Tibial artery (tissue), 4 donors: ENCODE measurements at regions of chr1 and their contacts with region 1.

Region 1: DNA sequence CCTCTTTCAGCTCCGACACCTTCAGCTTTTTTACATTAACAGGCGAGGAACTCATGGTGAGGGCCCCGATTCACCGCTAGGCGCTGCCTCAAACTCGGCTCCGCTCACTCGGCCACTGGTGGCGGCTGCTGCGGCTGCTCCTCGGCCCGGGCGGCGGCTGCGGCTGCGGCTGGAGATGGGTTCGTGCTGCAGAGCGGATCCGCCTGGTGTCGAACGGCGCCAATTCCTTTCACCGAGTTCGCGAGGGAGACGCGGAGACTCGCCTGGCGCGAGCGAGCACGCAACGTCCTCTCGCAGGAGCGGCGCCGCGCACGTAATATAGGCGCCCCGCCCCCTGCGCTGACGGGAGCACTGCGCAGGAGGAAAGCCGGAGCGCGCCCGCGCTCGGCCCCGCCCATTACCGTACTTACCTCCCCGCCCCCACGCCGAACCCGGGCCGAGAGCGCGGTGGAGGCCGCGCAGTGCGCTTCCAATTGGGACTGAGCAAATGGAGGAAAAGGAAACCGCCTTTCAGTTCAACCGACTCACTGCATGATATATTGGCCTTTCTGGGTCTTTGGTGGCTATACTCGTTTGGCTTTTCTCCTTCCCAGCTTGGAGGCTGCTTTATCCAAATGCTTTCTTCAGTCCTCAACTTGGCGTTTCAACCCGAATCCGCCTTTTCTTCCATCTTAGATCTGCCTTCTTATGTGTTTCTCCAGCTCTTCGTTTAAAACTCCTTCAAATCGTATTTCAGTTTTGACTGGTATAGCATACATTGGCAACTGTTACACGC is at the start of gene HNRNPU:
- DNase-seq: peak; percentile 97 to 98
- H3K4me3 ChIP-seq: peak within 1 kb of the TSS; percentile 96 to 98
- H3K27ac ChIP-seq: peak within 1 kb of the TSS; percentile 100
- H3K4me1 ChIP-seq: peaks cover 0 to 37% (median 21%) of the 10 kb centered on the region in 4 donors
- H3K27me3 ChIP-seq: no peaks in the 10 kb centered on the region
- CTCF ChIP-seq: peak; percentile 24 to 45

Region 2: DNA sequence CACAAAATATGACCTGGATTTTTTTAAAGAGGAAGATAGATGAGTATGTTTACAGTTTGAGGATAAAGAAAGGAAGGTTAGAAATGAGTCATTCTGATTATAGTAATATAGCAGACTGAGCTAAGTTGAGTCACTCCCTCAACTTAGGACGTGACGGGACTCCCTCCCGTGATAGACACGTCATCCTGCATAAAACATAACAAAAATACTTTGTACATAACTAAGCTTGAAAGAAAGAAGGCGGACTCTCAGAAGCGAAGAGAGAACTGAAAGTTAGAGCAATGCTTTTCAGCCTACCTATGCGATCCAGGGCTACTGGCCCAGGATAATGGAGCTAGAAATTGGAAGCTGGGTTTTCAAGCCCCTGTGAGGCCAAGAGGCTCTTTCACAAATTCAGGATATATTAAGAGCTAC is 264.5 kb before region 1 on chr1:
- intact Hi-C with region 1: loop called (anchors 5 kb)
- DNase-seq: peak in 1 of 2 donors; percentile 35
- H3K4me3 ChIP-seq: peak overlapping the region in 1 of 2 donors; percentile 12
- H3K27ac ChIP-seq: peak overlapping the region; percentile 47 to 56
- H3K4me1 ChIP-seq: peaks cover 0 to 5% (median 0%) of the 10 kb centered on the region in 4 donors
- H3K27me3 ChIP-seq: no peaks in the 10 kb centered on the region
- CTCF ChIP-seq: no peak

Region 3: DNA sequence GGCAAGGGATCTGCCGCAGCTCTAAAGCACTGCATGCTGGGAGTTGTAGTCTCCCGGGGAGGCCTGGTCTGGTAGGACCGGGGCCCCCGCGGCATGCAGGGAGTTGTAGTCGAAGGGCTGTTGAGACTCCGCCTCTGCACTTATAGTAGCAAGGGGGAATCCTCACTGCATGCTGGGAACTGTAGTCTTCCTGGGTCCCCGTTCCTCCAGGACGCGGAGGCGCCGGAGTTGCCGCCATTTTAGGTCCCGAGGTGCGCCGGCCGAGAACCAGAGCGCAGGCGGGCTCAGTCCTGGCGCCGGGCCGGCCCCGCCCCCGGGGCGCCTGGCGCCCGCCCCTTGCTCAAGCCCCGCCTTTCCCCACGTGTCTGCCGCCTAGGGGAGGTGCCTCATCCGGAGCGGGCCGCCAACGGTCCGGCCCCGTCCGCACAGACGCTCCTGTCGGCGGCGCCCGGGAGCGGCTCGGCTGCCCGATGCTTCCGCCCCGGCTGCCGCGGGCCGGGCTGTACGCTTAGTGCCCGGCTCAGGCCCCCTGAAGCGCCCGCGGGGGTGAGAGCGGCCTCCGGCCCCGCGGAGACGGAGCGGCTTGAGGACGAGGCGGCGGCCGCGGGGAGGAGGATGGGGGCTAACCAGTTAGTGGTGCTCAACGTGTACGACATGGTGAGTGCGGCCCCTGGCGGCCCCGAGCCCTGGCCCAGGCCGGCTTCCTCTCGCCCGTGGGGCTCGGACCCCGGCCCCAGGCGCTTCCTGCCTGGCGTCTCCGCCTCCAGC is 211.6 kb before region 1 on chr1 and contains the start of gene DESI2:
- intact Hi-C with region 1: loop called (anchors 10 kb)
- DNase-seq: peak; percentile 100
- H3K4me3 ChIP-seq: peak within 1 kb of the TSS; percentile 81 to 85
- H3K27ac ChIP-seq: peak within 1 kb of the TSS; percentile 89 to 93
- H3K4me1 ChIP-seq: peaks cover 0 to 40% (median 23%) of the 10 kb centered on the region in 4 donors
- H3K27me3 ChIP-seq: no peaks in the 10 kb centered on the region
- CTCF ChIP-seq: peak; percentile 53 to 63

Region 4: GRCh38 chr1:244835276-244836134 is 28.9 kb before region 1 on chr1 and contains the start of gene COX20:
- intact Hi-C with region 1: loop called (anchors 2 kb)
- DNase-seq: peak; percentile 86 to 95
- H3K4me3 ChIP-seq: peak within 1 kb of the TSS; percentile 65 to 72
- H3K27ac ChIP-seq: peak within 1 kb of the TSS; percentile 97 to 98
- H3K4me1 ChIP-seq: peaks cover 0 to 46% (median 28%) of the 10 kb centered on the region in 4 donors
- H3K27me3 ChIP-seq: no peaks in the 10 kb centered on the region
- CTCF ChIP-seq: peak; percentile 4 to 6

Region 5: GRCh38 chr1:244970661-244971551 is 106.5 kb after region 1 on chr1:
- intact Hi-C with region 1: loop called (anchors 1 kb)
- DNase-seq: peak; percentile 91 to 97
- H3K4me3 ChIP-seq: peak overlapping the region; percentile 70 to 81
- H3K27ac ChIP-seq: peak overlapping the region; percentile 99 to 100
- H3K4me1 ChIP-seq: peaks cover 0 to 17% (median 7%) of the 10 kb centered on the region in 4 donors
- H3K27me3 ChIP-seq: no peaks in the 10 kb centered on the region
- CTCF ChIP-seq: peak; percentile 52 to 74